ENCODE measurements at regions of chr5 and their contacts with region 1.

Region 1: DNA sequence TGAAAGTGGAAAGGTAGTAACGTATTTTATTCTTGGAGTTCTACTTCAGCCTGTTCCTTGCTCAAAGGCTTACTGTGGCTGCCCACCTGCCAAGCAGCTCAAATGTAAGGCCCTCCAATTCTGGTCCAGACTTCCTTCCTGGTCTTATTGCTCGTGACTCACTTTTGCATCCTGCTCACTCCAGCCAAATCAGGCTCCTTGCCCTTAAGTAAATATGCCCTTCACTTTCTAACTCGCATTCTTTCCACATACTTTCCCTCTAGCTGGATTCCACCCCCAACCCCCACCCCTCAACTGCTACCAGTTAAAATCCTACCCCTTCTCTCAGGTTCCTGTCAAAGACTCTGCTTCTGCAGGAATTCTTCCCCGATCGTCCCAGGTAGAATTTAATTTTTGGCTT is 96.6 kb downstream of the GALNT10 start:
- DNase-seq: peak; percentile 65 to 93
- H3K4me3 ChIP-seq: peak overlapping the region; percentile 27; the same call in 1 of the 2 replicates
- H3K27ac ChIP-seq: peak overlapping the region; percentile 71
- H3K4me1 ChIP-seq: peaks cover 64% of the 10 kb centered on the region
- H3K27me3 ChIP-seq: no peaks in the 10 kb centered on the region
- CTCF ChIP-seq: no peak

Region 2: DNA sequence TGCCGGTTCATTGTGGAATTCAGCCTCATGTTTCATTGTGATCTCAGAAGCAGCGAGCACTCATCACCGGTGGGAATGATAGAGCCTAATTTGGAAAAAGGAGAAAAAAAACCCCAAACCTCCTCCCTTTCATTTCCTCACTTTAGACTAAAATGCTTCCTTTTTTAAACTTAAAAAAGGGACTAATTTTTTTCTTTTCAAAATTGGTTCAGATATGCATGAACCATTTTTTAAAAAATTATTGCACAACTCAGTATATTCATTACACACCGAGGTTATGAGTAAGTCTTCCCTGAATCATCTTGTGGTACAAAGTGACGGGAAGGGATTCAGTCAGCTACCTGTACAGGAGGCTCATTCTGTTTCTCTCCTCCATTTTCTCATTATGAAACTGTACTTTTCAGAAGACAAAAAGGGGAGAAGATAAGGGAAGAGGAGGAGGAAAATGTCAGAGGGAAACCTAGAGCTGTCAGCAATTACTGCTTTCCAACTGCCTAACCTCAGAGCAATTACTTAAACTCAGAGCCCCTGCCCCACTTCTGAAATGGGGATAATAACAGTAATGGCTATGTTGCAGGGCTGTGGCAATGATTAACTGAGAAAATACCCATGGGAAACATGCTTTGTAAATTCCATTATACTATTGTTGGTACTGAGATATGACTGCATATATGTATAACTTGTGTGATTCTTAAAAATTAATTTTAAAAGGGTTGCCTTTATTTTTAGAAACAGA is 72.6 kb before region 1 on chr5:
- CTCF ChIA-PET with region 1: no interaction called
- POLR2A ChIA-PET with region 1: interaction called, 3 read pairs
- intact Hi-C with region 1: loop called (anchors 1 kb)
- DNase-seq: peak in 1 of 2 experiments; percentile 83
- H3K4me3 ChIP-seq: no peak overlapping the region
- H3K27ac ChIP-seq: peak overlapping the region; percentile 79
- H3K4me1 ChIP-seq: peaks cover 74% of the 10 kb centered on the region
- H3K27me3 ChIP-seq: no peaks in the 10 kb centered on the region
- CTCF ChIP-seq: no peak

Region 3: DNA sequence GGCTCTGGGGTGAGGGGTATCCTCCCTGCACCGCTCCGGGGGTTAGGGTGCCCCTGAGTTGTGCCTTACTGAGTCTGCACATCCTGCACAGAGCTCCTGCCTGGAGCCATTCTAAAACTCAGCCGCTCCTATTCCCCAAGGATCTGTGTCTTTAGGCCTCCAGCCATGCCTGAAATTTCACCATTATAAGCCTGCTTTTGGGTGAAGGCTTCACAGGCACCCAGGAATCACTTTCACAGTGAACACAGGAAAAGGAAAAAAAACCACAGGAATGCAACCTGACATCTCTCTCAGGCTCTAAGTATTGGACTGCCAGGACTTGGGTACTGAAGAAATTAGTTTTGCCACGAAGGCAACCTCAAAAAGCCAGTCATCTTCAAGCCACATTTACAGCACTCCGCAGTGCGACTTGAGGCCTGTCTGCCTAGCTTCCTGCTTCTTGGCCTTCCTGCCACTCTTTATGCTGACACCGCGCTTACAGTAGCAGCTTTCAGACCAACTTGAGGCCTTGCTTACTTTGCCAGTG is 65.7 kb before region 1 on chr5:
- CTCF ChIA-PET with region 1: interaction called, 9 read pairs
- POLR2A ChIA-PET with region 1: interaction called, 8 read pairs
- intact Hi-C with region 1: loop called (anchors 2 kb)
- DNase-seq: peak; percentile 78 to 95
- H3K4me3 ChIP-seq: peak overlapping the region; percentile 17; the same call in 1 of the 2 replicates
- H3K27ac ChIP-seq: peak overlapping the region; percentile 91
- H3K4me1 ChIP-seq: peaks cover 50% of the 10 kb centered on the region
- H3K27me3 ChIP-seq: no peaks in the 10 kb centered on the region
- CTCF ChIP-seq: no peak

Region 4: GRCh38 chr5:154308443-154309370 is 21.6 kb after region 1 on chr5:
- CTCF ChIA-PET with region 1: no interaction called
- POLR2A ChIA-PET with region 1: no interaction called
- intact Hi-C with region 1: loop called (anchors 1 kb)
- DNase-seq: peak in 1 of 2 experiments; percentile 79
- H3K4me3 ChIP-seq: no peak overlapping the region
- H3K27ac ChIP-seq: peak overlapping the region; percentile 60
- H3K4me1 ChIP-seq: peaks cover 73% of the 10 kb centered on the region
- H3K27me3 ChIP-seq: no peaks in the 10 kb centered on the region
- CTCF ChIP-seq: no peak

Region 5: GRCh38 chr5:154368041-154368800 is 81.1 kb after region 1 on chr5:
- CTCF ChIA-PET with region 1: no interaction called
- POLR2A ChIA-PET with region 1: interaction called, 8 read pairs
- intact Hi-C with region 1: loop called (anchors 5 kb)
- DNase-seq: peak; percentile 76 to 96
- H3K4me3 ChIP-seq: peak overlapping the region; percentile 34; the same call in 1 of the 2 replicates
- H3K27ac ChIP-seq: peak overlapping the region; percentile 98
- H3K4me1 ChIP-seq: peaks cover 69% of the 10 kb centered on the region
- H3K27me3 ChIP-seq: no peaks in the 10 kb centered on the region
- CTCF ChIP-seq: no peak

Region 6: GRCh38 chr5:154972476-154973080 is 685.4 kb after region 1 on chr5:
- CTCF ChIA-PET with region 1: no interaction called
- POLR2A ChIA-PET with region 1: no interaction called
- intact Hi-C with region 1: no loop called
- DNase-seq: peak in 1 of 2 experiments; percentile 24
- H3K4me3 ChIP-seq: no peak overlapping the region
- H3K27ac ChIP-seq: no peak overlapping the region
- H3K4me1 ChIP-seq: peaks cover 6% of the 10 kb centered on the region; the same call in 1 of the 2 replicates
- H3K27me3 ChIP-seq: no peaks in the 10 kb centered on the region
- CTCF ChIP-seq: peak; percentile 78